Posterior vena cava (tissue), 2 donors: ENCODE measurements at regions of chr10 and their contacts with region 1.

Region 1: GRCh38 chr10:71010730-71011129 is 122.4 kb upstream of the PCBD1 start:
- DNase-seq: peak; percentile 30

Region 2: DNA sequence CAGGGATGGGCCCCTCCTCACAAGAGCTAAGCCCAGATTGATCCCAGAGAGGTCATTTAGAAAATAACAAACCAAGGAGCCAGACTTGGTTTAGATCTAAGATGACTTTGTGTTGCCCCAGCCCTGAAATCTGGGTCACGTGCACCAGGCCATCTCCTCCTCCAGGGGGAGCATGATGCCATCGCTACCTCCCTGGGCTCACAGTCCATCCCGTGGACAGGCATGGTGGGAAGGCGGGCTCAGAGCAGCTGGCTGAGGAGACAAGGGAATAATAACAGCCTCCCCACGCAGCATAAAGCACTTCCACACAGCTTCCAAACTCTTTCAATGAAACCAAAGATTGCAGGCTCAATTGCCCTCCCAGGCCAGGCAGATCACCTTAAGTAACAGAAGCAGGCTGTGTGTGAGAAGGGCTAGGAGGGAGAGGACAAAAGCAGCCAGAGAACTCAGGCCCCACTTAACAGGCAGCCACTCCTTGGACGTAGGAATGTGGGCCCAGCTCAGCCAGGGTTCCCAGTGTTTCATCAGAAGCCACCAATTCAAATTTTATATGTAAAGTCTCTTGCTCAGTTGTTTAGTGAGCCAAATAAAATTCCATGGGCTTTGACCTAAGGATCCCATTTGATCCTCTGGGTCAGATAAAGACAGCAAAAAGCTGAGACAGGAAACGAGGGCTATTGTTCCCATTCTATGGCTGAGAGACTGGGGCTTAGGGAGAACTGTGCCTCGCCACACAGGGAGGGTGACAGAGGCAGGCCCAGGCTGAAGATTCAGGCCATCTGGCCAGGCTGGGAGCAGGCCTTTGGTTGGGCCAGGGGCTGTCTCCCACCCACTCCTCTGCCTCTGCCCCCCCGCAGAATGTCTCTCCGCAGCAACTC is 1108.9 kb before region 1 on chr10:
- intact Hi-C with region 1: loop called in 1 of 2 experiments (anchors 5 kb)
- DNase-seq: no peak